Breast epithelium (tissue), 4 donors: ENCODE measurements at regions of chr19 and their contacts with region 1.

Region 1: GRCh38 chr19:18281082-18282020 is at the start of gene JUND:
- DNase-seq: peak; percentile 97 to 99
- H3K4me3 ChIP-seq: peak within 1 kb of the TSS; percentile 95 to 98 (median 97)
- H3K27ac ChIP-seq: peak within 1 kb of the TSS; percentile 100
- H3K4me1 ChIP-seq: no peaks in the 10 kb centered on the region
- H3K27me3 ChIP-seq: no peaks in the 10 kb centered on the region
- CTCF ChIP-seq: peak in 1 of 3 donors; percentile 31
- POLR2A ChIP-seq: peak; percentile 46
- total RNA-seq, gene JUND: 325 to 833 (median 602) TPM

Region 2: DNA sequence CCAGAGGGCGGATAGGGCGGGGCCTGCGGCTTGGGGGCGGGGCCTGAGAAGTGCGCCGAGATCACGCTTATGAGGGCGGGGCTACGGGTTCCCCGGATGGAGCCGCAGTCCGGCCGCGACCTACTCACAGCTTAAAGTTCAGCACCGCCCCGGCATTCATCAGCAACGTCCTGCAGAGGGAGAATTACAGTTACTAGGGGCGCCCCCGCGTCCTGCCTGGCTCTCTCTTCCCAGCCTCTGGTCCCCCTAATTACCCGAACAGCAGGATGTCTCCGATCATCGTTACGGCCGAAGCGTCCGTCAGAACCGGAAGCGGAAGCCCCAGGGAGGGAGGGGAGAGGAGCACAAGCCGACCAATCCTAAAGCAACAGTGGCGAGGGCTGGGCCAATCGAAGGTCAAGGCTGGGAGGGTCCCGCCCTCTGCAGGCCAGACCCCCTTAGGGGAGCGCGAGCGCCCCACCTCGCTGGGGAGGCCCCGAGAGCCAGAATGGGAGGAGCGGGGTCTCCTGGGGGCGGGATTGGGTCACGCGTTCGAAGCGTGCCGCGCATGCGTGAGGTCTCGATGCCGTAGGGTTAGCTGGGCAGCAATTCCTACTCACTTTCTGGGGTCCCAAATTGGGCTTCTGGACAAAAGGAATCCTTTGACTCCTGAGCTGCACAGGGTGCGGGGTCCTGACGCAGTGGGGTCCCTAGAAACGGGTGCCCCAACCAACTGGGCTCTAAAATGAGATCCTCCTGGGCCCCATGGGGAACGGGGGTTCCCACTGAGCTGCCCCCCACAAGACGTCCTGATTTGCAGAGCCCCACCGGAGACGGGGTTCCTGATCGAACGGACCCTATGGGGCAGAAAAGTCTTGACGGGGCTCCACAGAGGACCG is 1621.3 kb before region 1 on chr19 and contains the start of gene SMIM7:
- intact Hi-C with region 1: loop called (anchors 5 kb)
- DNase-seq: peak; percentile 98
- H3K4me3 ChIP-seq: peak within 1 kb of the TSS; percentile 70 to 90 (median 73)
- H3K27ac ChIP-seq: peak within 1 kb of the TSS; percentile 84 to 95
- H3K4me1 ChIP-seq: peaks cover 0 to 9% of the 10 kb centered on the region in 2 donors
- H3K27me3 ChIP-seq: no peaks in the 10 kb centered on the region
- CTCF ChIP-seq: peak in 2 of 3 donors; percentile 15 to 20
- POLR2A ChIP-seq: peak; percentile 95
- total RNA-seq, gene SMIM7: 111 to 167 (median 142) TPM

Region 3: DNA sequence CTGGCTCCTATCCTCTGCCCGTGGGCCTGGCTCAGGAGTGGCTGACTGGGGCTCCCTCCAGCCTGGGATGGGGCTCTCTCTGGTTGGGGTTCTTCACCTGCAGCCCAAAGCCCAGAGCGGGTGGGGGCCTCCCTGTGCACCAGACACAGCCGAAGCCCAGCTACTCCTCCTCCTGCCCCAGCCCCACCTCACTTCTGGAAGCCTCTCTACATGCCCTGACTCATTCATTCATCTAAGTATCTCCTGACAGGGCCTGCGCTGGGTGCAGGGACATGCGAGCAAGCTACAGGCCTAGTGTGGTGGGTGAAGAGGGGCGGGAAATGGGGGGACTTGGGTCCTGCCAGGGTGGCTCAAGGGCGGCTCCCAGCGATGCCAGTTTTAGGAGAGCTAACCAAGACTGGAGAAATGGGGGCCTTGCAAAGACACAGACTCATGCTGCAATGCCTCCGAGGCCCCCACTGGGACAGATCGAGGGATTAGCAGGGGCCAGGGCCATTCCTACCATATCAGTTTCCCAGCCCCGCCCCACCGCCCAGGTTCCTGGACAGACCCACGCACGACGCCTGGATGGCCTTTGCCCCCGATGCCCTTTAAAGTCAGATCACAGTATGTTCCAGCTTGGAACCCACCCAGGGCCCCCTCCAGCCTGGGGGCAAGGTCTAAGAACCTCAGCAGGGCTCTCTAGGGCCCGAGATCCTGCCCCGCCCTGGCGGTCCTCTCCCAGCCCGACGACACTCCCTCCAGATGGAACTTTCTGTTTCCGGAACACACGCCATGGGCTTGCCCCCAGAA is 29.0 kb after region 1 on chr19:
- intact Hi-C with region 1: no loop called
- DNase-seq: no peak
- H3K4me3 ChIP-seq: no peak overlapping the region
- H3K27ac ChIP-seq: no peak overlapping the region
- H3K4me1 ChIP-seq: peaks cover under 1 to 2% of the 10 kb centered on the region in 2 donors
- H3K27me3 ChIP-seq: no peaks in the 10 kb centered on the region
- CTCF ChIP-seq: no peak
- POLR2A ChIP-seq: no peak

Region 4: GRCh38 chr19:18322759-18323460 is 41.6 kb after region 1 on chr19 and contains the start of gene LSM4:
- intact Hi-C with region 1: loop called (anchors 5 kb)
- DNase-seq: peak; percentile 98 to 99
- H3K4me3 ChIP-seq: peak within 1 kb of the TSS; percentile 71 to 90 (median 86)
- H3K27ac ChIP-seq: peak within 1 kb of the TSS; percentile 87 to 96
- H3K4me1 ChIP-seq: no peaks in the 10 kb centered on the region
- H3K27me3 ChIP-seq: no peaks in the 10 kb centered on the region
- CTCF ChIP-seq: peak in 1 of 3 donors; percentile 42
- POLR2A ChIP-seq: peak; percentile 53
- total RNA-seq, gene LSM4: 83.0 to 122 (median 120) TPM